Activated naive CD8-positive, alpha-beta T cell treated with anti-CD3 and anti-CD28 coated beads, Interleukin-2, amount 10 ng/mL, durations not matched to agents 7 days and 5 days (primary cell): ENCODE measurements at regions of chr9 and their contacts with region 1.

Region 1: GRCh38 chr9:122912964-122913673 is at the start of gene ZBTB6:
- DNase-seq: peak; percentile 71
- ATAC-seq: peak; percentile 98
- H3K4me3 Mint-ChIP-seq: peak within 1 kb of the TSS; percentile 94
- H3K27ac Mint-ChIP-seq: peak within 1 kb of the TSS; percentile 96
- H3K4me1 Mint-ChIP-seq: peaks cover 22% of the 10 kb centered on the region
- H3K27me3 Mint-ChIP-seq: no peaks in the 10 kb centered on the region
- total RNA-seq, gene ZBTB6: 13.0 to 13.6 TPM

Region 2: DNA sequence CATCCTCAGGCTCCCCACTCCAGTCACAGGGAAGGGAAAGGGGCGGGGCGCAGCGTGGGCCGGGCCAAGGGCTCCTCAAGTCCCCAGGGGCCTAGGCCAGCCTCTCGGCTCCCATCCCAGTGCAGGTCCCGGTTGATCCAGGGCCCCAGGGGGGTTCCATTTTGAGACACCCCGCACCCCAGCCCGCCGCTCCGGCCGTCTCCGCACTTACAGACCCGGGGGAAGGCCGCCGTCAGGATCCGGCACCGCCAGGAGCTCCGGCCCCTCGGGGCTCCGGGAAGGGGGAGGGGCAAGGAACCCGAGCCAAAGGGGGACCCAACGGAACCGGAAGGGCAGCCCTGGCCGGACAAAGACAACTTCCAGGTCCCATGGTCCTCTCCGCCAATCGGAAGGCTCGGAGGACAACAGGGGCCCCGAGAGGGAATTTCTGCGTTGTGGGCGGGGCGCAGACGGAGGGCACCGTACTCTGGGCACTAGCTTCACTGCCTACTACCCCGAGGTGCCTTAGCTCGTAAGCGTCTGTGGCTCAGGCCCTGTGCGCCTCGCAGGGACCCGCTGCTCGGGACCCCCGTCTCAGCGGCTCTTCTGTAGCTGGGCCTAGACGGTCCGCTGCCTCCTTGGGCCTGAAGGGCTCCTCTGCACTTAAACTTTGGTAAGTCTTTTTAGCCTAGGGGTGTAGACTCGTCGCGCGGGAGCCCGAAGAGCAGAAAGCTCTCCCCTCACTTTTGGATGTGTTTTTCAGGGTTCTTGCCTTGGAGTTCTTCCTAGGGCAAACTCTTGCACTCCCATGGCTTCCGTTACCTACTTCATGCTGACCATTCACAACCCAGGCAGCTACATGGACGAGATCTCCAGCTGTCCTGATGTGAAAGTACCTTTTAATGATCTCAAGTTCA is 18.4 kb after region 1 on chr9 and contains the start of gene ZBTB26:
- POLR2A ChIA-PET with region 1: interaction called, 33 read pairs
- DNase-seq: peak; percentile 85
- ATAC-seq: peak; percentile 98
- H3K4me3 Mint-ChIP-seq: no peak within 1 kb of the TSS
- H3K27ac Mint-ChIP-seq: peak within 1 kb of the TSS; percentile 85
- H3K4me1 Mint-ChIP-seq: peaks cover 13% of the 10 kb centered on the region
- H3K27me3 Mint-ChIP-seq: no peaks in the 10 kb centered on the region
- total RNA-seq, gene ZBTB26: 8.3 to 11.2 TPM

Region 3: GRCh38 chr9:122940603-122941559 is 27.8 kb after region 1 on chr9 and contains the start of gene RABGAP1:
- POLR2A ChIA-PET with region 1: interaction called, 26 read pairs
- DNase-seq: peak; percentile 94
- ATAC-seq: peak; percentile 100
- H3K4me3 Mint-ChIP-seq: peak within 1 kb of the TSS; percentile 97
- H3K27ac Mint-ChIP-seq: peak within 1 kb of the TSS; percentile 94
- H3K4me1 Mint-ChIP-seq: peaks cover 28% of the 10 kb centered on the region
- H3K27me3 Mint-ChIP-seq: no peaks in the 10 kb centered on the region
- total RNA-seq, gene RABGAP1: 25.5 to 27.7 TPM

Region 4: DNA sequence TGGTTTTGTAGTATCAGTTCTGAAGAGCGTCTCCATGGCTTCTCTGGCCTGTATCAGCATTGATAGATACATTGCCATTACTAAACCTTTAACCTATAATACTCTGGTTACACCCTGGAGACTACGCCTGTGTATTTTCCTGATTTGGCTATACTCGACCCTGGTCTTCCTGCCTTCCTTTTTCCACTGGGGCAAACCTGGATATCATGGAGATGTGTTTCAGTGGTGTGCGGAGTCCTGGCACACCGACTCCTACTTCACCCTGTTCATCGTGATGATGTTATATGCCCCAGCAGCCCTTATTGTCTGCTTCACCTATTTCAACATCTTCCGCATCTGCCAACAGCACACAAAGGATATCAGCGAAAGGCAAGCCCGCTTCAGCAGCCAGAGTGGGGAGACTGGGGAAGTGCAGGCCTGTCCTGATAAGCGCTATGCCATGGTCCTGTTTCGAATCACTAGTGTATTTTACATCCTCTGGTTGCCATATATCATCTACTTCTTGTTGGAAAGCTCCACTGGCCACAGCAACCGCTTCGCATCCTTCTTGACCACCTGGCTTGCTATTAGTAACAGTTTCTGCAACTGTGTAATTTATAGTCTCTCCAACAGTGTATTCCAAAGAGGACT is 121.9 kb after region 1 on chr9:
- POLR2A ChIA-PET with region 1: no interaction called
- DNase-seq: no peak
- ATAC-seq: no peak
- H3K4me3 Mint-ChIP-seq: no peak overlapping the region
- H3K27ac Mint-ChIP-seq: no peak overlapping the region
- H3K4me1 Mint-ChIP-seq: no peaks in the 10 kb centered on the region
- H3K27me3 Mint-ChIP-seq: no peaks in the 10 kb centered on the region